ENCODE measurements at regions of chr4 and their contacts with region 1.

Region 1: GRCh38 chr4:24980064-24980690 is 50.6 kb downstream of the LGI2 start:
- DNase-seq: peak in 1 of 2 donors; percentile 78
- ATAC-seq: peak; percentile 55 to 87 (median 66)
- H3K4me3 ChIP-seq: peak overlapping the region in 7 of 10 donors; percentile 21 to 47 (median 39)
- H3K27ac ChIP-seq: peak overlapping the region; percentile 73 to 95 (median 88)
- H3K4me1 ChIP-seq: peaks cover 3 to 41% (median 27%) of the 10 kb centered on the region in 9 donors
- H3K27me3 ChIP-seq: no peaks in the 10 kb centered on the region
- CTCF ChIP-seq: peak; percentile 83 to 94 (median 88)

Region 2: DNA sequence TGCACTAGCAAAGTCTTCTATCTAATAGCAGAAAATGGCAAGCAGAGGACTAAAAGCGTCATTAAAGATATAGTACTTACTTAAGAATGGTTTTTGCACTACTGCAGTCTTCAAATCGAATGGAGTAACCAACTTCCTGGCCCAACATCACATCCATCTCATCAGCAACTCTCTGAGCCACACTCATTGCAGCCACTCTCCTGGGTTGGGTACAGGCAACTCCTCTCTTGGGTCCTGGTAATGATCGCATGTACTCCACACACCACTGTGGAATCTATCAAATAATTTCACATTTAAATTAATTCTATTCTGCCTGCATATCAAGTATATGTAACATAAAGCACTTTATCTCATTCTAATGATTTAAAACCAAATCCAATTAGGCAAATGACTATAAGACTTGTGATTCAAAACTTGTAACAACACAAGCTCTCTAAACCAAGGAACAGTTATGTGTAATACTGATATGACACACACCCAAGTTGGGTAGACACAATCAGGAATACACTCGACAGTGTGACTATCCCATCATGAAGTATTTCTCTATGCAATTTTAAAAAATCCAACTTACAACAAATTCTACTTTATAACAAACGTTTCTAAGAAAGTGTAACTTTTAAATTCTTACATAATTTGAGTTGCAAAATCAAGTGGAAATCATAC is 409.5 kb before region 1 on chr4:
- intact Hi-C with region 1: no loop called
- DNase-seq: no peak
- ATAC-seq: peak in 1 of 8 donors; percentile 47
- H3K4me3 ChIP-seq: no peak overlapping the region
- H3K27ac ChIP-seq: no peak overlapping the region
- H3K4me1 ChIP-seq: peaks cover 0 to 71% (median 29%) of the 10 kb centered on the region in 9 donors
- H3K27me3 ChIP-seq: no peaks in the 10 kb centered on the region
- CTCF ChIP-seq: no peak

Region 3: DNA sequence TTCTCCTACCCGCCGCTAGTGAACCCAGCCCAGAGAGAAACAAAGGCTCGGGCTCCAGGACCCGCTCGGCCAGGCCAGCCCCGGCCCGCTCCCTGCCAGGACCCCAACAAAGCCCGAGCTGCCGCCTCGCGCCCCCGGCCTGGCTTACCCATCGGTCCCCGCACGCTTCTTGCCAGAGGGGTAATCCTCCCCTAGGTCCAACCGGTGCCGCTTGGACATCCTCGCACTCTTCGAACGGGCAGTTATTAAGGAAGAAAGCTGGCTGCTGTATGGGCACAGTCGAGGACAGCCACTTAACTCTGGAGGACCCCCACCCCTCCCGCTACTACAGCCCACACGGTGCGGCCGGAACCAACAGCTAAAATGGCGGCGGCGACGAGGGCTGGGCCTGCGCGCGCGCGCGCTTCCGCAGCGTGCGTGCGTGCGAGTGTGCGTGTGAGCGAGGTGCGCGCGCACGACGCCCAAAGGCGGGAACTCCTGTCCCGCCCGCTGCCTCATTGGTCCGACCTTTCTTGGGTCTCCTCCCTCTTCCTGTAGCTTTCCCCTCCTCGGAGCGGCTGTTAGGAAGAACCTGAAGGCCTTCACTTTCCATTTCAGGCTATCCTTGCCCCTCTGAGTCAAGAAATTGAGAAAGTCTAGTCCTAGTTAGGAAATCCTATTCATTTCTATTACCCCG is 395.9 kb before region 1 on chr4 and contains the start of gene DHX15:
- intact Hi-C with region 1: loop called in 1 of 10 experiments (anchors 5 kb)
- DNase-seq: peak; percentile 95
- ATAC-seq: peak; percentile 96 to 99 (median 98)
- H3K4me3 ChIP-seq: peak within 1 kb of the TSS; percentile 70 to 100 (median 94)
- H3K27ac ChIP-seq: peak within 1 kb of the TSS; percentile 92 to 99 (median 98)
- H3K4me1 ChIP-seq: peaks cover 0 to 53% (median 42%) of the 10 kb centered on the region in 9 donors
- H3K27me3 ChIP-seq: no peaks in the 10 kb centered on the region
- CTCF ChIP-seq: no peak
- total RNA-seq, gene DHX15: 42.5 to 69.6 (median 48.0) TPM

Region 4: GRCh38 chr4:24781999-24782745 is 198.0 kb before region 1 on chr4:
- intact Hi-C with region 1: no loop called
- DNase-seq: no peak
- ATAC-seq: peak; percentile 50 to 77 (median 66)
- H3K4me3 ChIP-seq: no peak overlapping the region
- H3K27ac ChIP-seq: peak overlapping the region in 5 of 10 donors; percentile 49 to 63 (median 51)
- H3K4me1 ChIP-seq: peaks cover 0 to 36% (median 24%) of the 10 kb centered on the region in 9 donors
- H3K27me3 ChIP-seq: no peaks in the 10 kb centered on the region
- CTCF ChIP-seq: no peak

Region 5: DNA sequence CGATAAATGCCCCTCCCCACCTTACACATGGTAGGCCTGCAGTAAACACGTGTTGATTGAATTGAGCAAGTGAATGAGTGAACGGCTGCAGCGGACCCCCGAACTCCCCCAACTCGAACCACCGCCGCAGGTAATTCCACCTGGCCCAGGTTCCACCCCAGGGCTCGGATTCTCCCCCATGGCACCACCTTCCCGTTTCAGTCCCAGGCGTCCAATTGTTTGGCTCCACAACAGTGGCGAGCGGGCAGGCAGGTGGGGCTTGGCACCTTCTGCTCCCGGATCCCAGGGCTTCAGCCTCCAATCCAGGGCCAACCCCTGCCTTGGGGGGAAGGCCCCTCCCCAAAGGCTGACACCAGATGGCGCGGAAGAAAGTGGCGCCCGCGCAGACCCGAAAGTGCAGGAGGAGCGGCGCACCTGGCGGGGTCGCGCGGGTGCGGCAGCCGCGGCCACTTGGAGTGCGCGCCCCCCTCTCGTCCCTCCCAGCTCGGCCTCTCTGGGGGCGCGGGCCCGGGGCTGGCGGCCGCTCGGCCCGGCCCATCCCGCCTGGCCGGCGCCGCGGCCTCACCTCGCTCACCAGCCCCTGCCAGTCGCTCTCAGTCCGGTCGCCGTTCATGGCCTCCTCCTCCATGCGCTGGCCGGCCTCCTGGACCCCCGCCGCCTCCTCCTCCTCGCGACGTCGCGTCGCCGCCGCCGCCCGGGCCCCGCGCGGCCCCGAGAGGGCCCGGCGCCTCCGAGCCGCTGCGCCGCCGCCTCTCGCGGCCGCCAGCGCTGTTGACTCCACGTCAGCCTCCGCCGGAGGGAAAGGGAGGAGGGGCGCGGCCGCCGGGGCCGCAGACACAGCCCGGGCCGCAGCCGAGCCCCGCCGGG is 67.7 kb before region 1 on chr4 and contains the start of gene CCDC149:
- intact Hi-C with region 1: loop called in 5 of 10 experiments (anchors 2 to 5 kb)
- DNase-seq: peak; percentile 70 to 76
- ATAC-seq: peak; percentile 84 to 93 (median 90)
- H3K4me3 ChIP-seq: peak within 1 kb of the TSS; percentile 37 to 74 (median 67)
- H3K27ac ChIP-seq: peak within 1 kb of the TSS; percentile 87 to 97 (median 92)
- H3K4me1 ChIP-seq: peaks cover 2 to 21% (median 7%) of the 10 kb centered on the region in 9 donors
- H3K27me3 ChIP-seq: no peaks in the 10 kb centered on the region
- CTCF ChIP-seq: peak in 5 of 9 donors; percentile 7 to 38 (median 19)
- total RNA-seq, gene CCDC149: 8.0 to 17.7 (median 9.3) TPM

Region 6: DNA sequence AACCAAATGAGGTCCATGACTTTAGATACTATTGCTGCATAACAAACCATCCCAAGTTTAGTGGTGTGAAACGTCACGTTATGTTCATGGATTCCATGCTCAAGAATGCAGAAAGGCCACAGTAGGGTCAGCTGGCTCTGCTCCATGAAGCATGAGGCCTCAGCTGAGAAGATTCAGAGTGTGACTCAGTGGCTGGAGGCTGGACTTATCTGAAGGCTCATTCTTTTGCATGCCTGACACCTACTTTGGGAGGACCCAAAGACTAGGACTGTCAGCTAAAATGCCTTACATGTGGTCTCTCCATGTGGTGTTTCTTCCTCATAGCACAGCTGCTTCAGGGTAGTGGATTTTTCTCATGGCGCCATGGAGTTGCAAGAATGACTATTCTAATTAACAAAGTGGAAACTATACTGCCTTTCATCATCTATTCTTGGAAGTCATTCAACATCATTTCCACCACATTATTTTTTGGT is 55.8 kb before region 1 on chr4:
- intact Hi-C with region 1: loop called in 1 of 10 experiments (anchors 10 kb)
- DNase-seq: no peak
- ATAC-seq: no peak
- H3K4me3 ChIP-seq: no peak overlapping the region
- H3K27ac ChIP-seq: no peak overlapping the region
- H3K4me1 ChIP-seq: peaks cover 0 to 6% (median 0%) of the 10 kb centered on the region in 9 donors
- H3K27me3 ChIP-seq: peaks cover 0 to 3% (median 0%) of the 10 kb centered on the region in 7 donors
- CTCF ChIP-seq: no peak

Region 7: GRCh38 chr4:25030277-25031076 is 50.3 kb after region 1 on chr4 and contains the start of gene LGI2:
- intact Hi-C with region 1: no loop called
- DNase-seq: peak; percentile 44 to 51
- ATAC-seq: peak; percentile 60 to 87 (median 77)
- H3K4me3 ChIP-seq: peak within 1 kb of the TSS; percentile 37 to 72 (median 62)
- H3K27ac ChIP-seq: peak within 1 kb of the TSS in 8 of 10 donors; percentile 27 to 73 (median 51)
- H3K4me1 ChIP-seq: peaks cover 2 to 18% (median 9%) of the 10 kb centered on the region in 9 donors
- H3K27me3 ChIP-seq: peaks cover 0 to 62% (median 0%) of the 10 kb centered on the region in 7 donors
- CTCF ChIP-seq: no peak
- total RNA-seq, gene LGI2: 1.6 to 7.9 (median 2.5) TPM

Region 8: DNA sequence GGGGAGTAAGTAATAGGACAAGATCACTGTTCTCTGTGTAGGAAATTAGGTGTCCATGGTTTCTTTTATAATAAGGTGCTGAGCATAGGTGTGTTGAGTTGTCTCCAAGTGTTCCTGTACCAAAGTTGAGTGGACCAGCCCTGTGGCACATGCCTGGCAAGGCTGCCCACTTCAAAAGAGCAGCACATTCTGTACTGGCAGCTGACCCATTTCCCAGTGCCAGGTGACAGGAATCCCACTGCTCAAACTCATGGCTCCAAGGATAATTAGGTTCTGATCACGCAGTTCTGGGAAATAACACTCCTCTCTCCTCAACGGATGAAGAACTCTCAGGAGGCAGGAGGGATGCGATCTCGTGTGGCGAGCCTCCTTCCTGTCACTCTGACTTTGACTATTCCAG is 63.4 kb after region 1 on chr4:
- intact Hi-C with region 1: loop called in 2 of 10 experiments (anchors 5 kb)
- DNase-seq: no peak
- ATAC-seq: peak in 3 of 8 donors; percentile 20 to 39 (median 34)
- H3K4me3 ChIP-seq: no peak overlapping the region
- H3K27ac ChIP-seq: no peak overlapping the region
- H3K4me1 ChIP-seq: peaks cover 0 to 5% (median 0%) of the 10 kb centered on the region in 9 donors
- H3K27me3 ChIP-seq: no peaks in the 10 kb centered on the region
- CTCF ChIP-seq: no peak

Region 9: GRCh38 chr4:25058796-25059195 is 78.6 kb after region 1 on chr4:
- intact Hi-C with region 1: loop called in 1 of 10 experiments (anchors 1 kb)
- DNase-seq: no peak
- ATAC-seq: no peak
- H3K4me3 ChIP-seq: no peak overlapping the region
- H3K27ac ChIP-seq: no peak overlapping the region
- H3K4me1 ChIP-seq: peaks cover 0 to 14% (median 4%) of the 10 kb centered on the region in 9 donors
- H3K27me3 ChIP-seq: no peaks in the 10 kb centered on the region
- CTCF ChIP-seq: no peak

Region 10: DNA sequence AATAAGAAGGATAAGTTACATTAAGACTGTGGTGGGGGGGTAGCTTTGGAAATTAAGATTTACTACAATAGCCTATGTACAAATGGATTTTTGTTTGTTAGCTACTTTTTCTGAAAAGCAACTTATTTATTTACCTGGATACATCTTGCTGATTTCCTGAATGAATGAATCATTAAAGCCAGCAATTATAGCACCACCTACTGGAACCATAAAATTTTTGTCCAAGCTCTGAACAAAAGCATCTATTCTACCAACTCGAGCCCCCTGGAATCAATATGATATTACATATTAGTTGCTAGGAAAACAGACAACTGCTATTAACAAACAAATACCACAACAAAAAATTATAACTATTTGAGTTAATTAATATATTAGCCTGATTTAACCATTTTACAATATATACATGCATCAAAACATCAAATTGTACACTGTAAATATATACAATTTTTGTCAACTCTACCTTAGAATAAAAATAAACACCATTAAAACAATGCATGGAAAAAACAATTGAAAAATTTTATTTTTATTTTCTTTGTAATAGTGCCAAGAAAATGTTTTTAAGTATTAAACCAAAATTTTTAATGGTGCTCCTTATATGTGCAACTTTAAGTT is 164.8 kb after region 1 on chr4:
- intact Hi-C with region 1: loop called (anchors 1 to 10 kb)
- DNase-seq: no peak
- ATAC-seq: peak in 1 of 8 donors; percentile 38
- H3K4me3 ChIP-seq: no peak overlapping the region
- H3K27ac ChIP-seq: no peak overlapping the region
- H3K4me1 ChIP-seq: peaks cover 0 to 11% (median 0%) of the 10 kb centered on the region in 9 donors
- H3K27me3 ChIP-seq: no peaks in the 10 kb centered on the region
- CTCF ChIP-seq: peak; percentile 36 to 76 (median 63)

Measured in heart right ventricle (tissue), 16 donors.